Activated CD8-positive, alpha-beta T cell treated with anti-CD3 and anti-CD28 coated beads for 36 hours (primary cell): ENCODE measurements at regions of chr6 and their contacts with region 1.

Region 1: DNA sequence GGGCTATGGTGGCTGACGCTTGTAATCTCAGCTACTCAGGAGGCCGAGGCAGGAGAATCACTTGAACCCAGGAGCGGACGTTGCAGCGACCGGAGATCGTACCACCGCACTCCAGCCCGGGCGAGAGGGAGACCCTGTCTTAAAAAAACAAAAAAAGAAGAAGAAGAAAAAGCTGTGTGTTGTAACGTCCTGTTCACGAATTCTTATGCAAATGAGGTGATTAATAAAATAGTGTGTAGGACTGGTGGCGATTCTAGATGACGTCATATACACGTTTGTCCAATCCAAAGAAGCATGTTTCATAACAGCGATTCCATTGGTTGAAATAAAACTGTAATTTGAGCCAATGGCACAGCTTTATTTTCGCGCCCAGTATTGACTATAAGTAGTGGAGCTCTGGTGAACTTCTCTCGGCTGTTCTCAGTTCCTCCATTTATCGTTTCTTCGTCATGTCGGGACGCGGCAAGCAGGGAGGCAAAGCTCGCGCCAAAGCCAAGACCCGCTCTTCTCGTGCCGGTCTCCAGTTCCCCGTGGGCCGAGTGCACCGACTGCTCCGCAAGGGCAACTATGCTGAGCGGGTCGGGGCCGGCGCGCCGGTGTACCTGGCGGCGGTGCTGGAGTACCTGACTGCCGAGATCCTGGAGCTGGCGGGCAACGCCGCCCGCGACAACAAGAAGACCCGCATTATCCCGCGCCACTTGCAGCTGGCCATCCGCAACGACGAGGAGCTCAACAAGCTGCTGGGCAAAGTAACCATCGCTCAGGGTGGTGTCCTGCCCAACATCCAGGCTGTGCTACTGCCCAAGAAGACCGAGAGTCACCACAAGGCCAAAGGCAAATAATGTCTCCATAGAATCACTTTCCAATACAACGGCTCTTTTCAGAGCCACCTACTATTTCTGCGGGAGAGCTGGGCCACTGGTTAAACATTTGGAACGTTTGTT is 47.0 kb downstream of the OR2B2 start:
- DNase-seq: peak; percentile 81
- ATAC-seq: peak; percentile 58
- H3K4me3 Mint-ChIP-seq: peak overlapping the region; percentile 91
- H3K27ac Mint-ChIP-seq: peak overlapping the region; percentile 98
- H3K4me1 Mint-ChIP-seq: peaks cover 27% of the 10 kb centered on the region
- H3K27me3 Mint-ChIP-seq: no peaks in the 10 kb centered on the region
- CTCF ChIP-seq: no peak

Region 2: DNA sequence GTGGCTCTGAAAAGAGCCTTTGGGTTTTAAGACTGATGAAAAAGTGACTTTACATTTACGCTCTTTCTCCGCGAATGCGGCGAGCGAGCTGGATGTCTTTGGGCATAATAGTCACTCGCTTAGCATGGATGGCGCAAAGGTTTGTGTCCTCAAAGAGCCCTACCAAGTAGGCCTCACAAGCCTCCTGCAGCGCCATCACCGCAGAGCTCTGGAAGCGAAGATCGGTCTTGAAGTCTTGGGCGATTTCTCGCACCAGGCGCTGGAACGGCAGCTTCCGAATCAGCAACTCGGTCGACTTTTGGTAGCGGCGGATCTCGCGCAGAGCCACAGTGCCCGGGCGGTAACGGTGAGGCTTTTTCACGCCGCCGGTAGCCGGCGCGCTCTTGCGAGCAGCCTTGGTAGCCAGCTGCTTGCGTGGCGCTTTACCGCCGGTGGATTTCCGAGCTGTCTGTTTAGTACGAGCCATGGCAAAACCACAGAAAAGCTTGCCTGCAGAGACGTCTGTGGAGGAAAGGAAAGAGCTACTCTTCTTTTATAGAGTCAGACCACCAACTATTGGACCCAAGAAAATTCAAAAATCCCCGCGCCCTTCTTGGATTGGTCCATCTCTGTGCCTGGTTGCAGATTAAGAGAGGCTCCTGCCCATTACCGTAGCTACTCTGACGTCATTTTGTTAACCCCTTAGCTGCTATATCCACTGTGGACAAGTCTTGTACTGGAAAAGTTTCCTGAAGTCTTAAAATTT is 1833.4 kb before region 1 on chr6:
- CTCF ChIA-PET with region 1: no interaction called
- POLR2A ChIA-PET with region 1: interaction called, 22 read pairs
- intact Hi-C with region 1: no loop called
- DNase-seq: peak; percentile 95
- ATAC-seq: peak; percentile 66
- H3K4me3 Mint-ChIP-seq: peak overlapping the region; percentile 91
- H3K27ac Mint-ChIP-seq: peak overlapping the region; percentile 98
- H3K4me1 Mint-ChIP-seq: peaks cover 50% of the 10 kb centered on the region
- H3K27me3 Mint-ChIP-seq: peaks cover 3% of the 10 kb centered on the region
- CTCF ChIP-seq: no peak

Region 3: GRCh38 chr6:27795697-27796494 is 69.3 kb before region 1 on chr6:
- CTCF ChIA-PET with region 1: no interaction called
- POLR2A ChIA-PET with region 1: no interaction called
- intact Hi-C with region 1: no loop called
- DNase-seq: peak; percentile 68
- ATAC-seq: peak; percentile 69
- H3K4me3 Mint-ChIP-seq: no peak overlapping the region
- H3K27ac Mint-ChIP-seq: no peak overlapping the region
- H3K4me1 Mint-ChIP-seq: peaks cover 30% of the 10 kb centered on the region
- H3K27me3 Mint-ChIP-seq: peaks cover 10% of the 10 kb centered on the region
- CTCF ChIP-seq: peak; percentile 72

Region 4: GRCh38 chr6:27809939-27810767 is 55.0 kb before region 1 on chr6:
- CTCF ChIA-PET with region 1: interaction called, 13 read pairs
- POLR2A ChIA-PET with region 1: interaction called, 470 read pairs
- intact Hi-C with region 1: loop called (anchors 2 kb)
- DNase-seq: peak; percentile 78
- ATAC-seq: peak; percentile 38
- H3K4me3 Mint-ChIP-seq: peak overlapping the region; percentile 88
- H3K27ac Mint-ChIP-seq: peak overlapping the region; percentile 87
- H3K4me1 Mint-ChIP-seq: peaks cover 56% of the 10 kb centered on the region
- H3K27me3 Mint-ChIP-seq: no peaks in the 10 kb centered on the region
- CTCF ChIP-seq: no peak

Region 5: DNA sequence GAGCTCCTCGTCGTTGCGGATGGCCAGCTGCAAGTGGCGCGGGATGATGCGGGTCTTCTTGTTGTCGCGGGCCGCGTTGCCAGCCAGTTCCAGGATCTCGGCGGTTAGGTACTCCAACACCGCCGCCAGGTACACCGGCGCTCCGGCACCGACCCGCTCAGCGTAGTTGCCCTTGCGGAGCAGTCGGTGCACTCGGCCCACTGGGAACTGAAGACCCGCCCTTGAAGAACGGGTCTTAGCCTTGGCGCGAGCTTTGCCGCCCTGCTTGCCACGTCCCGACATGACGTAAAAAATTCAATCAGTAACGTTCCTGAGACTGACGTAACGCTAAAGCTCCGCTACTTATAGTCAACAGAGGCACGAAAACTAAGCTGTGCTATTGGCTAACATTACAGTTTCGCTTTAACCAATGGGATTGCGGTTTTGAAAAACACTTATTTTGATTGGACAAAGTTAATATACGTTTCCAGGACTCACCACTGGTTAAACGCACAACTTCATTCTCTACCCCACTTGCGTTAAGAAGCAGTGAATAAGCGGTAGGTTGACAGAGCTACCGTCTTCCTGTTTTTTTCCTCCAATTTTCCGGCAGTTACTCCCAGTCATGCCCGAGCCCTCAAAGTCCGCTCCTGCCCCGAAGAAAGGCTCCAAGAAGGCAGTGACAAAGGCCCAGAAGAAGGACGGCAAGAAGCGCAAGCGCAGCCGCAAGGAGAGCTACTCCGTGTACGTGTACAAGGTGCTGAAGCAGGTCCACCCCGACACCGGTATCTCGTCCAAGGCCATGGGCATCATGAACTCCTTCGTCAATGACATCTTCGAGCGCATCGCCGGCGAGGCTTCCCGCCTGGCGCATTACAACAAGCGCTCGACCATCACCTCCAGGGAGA is 26.9 kb before region 1 on chr6:
- CTCF ChIA-PET with region 1: interaction called, 39 read pairs
- POLR2A ChIA-PET with region 1: interaction called, 1,105 read pairs
- intact Hi-C with region 1: loop called (anchors 2 kb)
- DNase-seq: peak; percentile 87
- ATAC-seq: peak; percentile 73
- H3K4me3 Mint-ChIP-seq: no peak overlapping the region
- H3K27ac Mint-ChIP-seq: no peak overlapping the region
- H3K4me1 Mint-ChIP-seq: peaks cover 20% of the 10 kb centered on the region
- H3K27me3 Mint-ChIP-seq: no peaks in the 10 kb centered on the region
- CTCF ChIP-seq: no peak

Region 6: GRCh38 chr6:27879837-27880236 is 14.7 kb after region 1 on chr6:
- CTCF ChIA-PET with region 1: no interaction called
- POLR2A ChIA-PET with region 1: interaction called, 48 read pairs
- intact Hi-C with region 1: no loop called
- DNase-seq: no peak
- ATAC-seq: no peak
- H3K4me3 Mint-ChIP-seq: no peak overlapping the region
- H3K27ac Mint-ChIP-seq: no peak overlapping the region
- H3K4me1 Mint-ChIP-seq: no peaks in the 10 kb centered on the region
- H3K27me3 Mint-ChIP-seq: no peaks in the 10 kb centered on the region
- CTCF ChIP-seq: no peak

Region 7: GRCh38 chr6:27962506-27962905 is 97.3 kb after region 1 on chr6:
- CTCF ChIA-PET with region 1: no interaction called
- POLR2A ChIA-PET with region 1: no interaction called
- intact Hi-C with region 1: no loop called
- DNase-seq: no peak
- ATAC-seq: no peak
- H3K4me3 Mint-ChIP-seq: no peak overlapping the region
- H3K27ac Mint-ChIP-seq: no peak overlapping the region
- H3K4me1 Mint-ChIP-seq: no peaks in the 10 kb centered on the region
- H3K27me3 Mint-ChIP-seq: peaks cover 30% of the 10 kb centered on the region
- CTCF ChIP-seq: no peak